Activated naive CD4-positive, alpha-beta T cell treated with anti-CD3 and anti-CD28 coated beads for 36 hours (primary cell): ENCODE measurements at regions of chr1 and their contacts with region 1.

Region 1: DNA sequence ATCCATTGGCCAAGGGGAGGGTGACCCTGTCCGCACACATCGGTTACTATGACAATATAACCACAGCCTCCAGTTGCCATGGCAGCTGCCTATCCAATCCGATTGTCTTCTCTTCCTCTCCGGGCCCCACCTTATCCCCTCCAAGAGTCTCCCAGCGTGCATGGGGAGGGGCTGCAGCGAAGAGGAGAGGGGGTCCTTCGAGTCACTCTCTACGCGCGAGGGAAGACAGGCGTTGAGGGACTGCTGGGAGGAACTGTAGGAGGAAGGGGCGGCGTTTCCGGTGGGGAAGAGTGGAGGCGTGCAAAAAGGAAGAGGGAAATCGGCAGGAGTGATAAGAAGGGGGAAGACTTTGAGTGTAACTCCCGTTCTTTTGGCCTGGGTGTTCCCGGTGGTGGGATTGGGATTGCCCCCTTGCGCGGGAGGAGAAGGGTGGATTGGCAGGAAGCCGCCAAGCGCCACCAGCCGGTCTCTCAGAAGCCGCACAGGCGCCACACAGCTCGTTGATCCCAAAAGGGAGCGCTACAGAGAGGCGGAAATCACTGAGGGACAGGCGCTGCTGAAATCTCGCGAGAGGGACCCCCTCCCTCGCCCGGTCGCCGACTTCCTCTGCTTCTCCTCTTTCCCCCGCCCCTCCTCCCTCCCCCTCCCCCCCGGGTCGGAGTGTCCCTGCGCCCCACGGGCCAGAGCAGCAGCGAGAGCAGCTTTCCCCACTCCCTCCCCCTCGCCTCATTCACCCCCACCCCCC is 384 bp upstream of the SMG7 start:
- DNase-seq: peak; percentile 98
- H3K4me3 Mint-ChIP-seq: peak overlapping the region; percentile 81
- H3K27ac Mint-ChIP-seq: peak overlapping the region; percentile 99
- H3K4me1 Mint-ChIP-seq: peaks cover 24% of the 10 kb centered on the region
- H3K27me3 Mint-ChIP-seq: no peaks in the 10 kb centered on the region

Region 2: DNA sequence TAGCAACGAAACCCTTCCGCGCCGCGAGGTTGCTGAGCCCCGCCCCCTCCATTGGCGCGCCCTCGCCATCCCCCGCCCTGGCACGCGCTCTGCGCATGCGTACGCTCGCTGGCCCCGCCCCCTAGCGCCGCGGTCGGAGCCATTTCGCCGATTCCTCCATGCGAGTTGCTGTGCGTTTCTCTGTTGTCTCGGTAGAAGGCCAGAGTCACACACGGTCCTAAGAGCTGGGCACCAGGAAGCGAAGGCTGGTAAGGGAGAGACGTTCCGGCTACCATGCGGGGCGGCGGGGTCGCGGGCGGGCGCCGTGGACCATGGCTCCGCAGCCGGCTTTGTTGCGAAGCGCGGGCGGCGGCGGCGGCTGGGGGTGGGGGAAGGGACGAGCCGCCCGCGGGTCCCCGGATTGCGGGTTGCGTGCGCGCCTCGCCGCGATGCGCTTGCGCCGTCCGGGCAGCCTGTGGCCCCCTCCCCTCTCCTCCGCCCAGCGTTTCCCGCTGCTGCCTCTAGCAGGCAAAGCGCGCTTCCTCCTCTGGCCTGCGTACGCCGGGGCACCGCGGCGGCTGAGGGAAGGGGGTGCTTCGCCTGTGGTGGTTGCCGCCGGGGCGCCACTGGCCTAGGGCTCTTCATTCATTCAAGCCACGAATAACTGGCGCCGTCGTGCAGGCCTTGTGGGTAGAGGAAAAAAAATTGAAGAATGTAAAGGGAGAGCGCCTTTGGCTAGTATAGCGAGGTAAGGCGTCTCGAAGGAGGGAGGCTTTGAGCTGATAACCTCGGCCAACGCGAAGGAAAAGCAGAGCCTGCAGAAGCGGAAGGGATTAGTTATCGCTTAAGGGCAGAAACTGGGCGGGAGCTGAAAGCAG is 632.5 kb before region 1 on chr1 and contains the start of gene DHX9:
- CTCF ChIA-PET with region 1: no interaction called
- intact Hi-C with region 1: loop called (anchors 1 kb)
- DNase-seq: peak; percentile 94
- H3K4me3 Mint-ChIP-seq: peak within 1 kb of the TSS; percentile 90
- H3K27ac Mint-ChIP-seq: peak within 1 kb of the TSS; percentile 95
- H3K4me1 Mint-ChIP-seq: peaks cover 44% of the 10 kb centered on the region
- H3K27me3 Mint-ChIP-seq: no peaks in the 10 kb centered on the region
- total RNA-seq, gene DHX9: 194 TPM

Region 3: DNA sequence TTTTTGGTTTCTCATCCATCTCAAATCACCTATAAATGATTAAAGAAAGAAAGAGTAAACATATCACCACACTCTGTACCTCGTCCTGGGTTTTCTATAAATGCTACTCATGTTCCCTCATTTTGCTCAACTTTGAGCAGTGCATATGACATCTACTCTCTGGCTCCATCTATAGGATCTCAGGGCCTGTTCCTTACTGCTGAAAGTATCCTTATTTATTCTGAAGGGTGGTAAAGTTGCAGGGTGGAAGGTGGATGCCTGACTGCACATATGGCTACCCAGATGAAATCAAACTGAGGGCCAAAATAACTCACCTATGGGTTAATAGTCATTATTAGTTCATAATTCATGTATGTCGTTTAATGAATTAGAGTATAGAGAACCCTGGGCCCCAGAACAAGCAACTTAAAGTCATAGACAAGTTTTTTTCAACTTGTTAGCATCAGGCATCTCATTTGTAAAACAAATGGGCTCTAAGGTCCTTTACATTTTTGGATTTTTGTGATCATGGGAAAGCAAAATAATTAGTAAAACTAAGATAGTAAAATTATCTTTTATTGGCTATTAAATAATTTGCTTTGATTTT is 71.8 kb after region 1 on chr1:
- CTCF ChIA-PET with region 1: interaction called, 3 read pairs
- intact Hi-C with region 1: loop called (anchors 1 kb)
- DNase-seq: no peak
- H3K4me3 Mint-ChIP-seq: no peak overlapping the region
- H3K27ac Mint-ChIP-seq: peak overlapping the region; percentile 43
- H3K4me1 Mint-ChIP-seq: no peaks in the 10 kb centered on the region
- H3K27me3 Mint-ChIP-seq: no peaks in the 10 kb centered on the region

Region 4: GRCh38 chr1:183655562-183656075 is 183.7 kb after region 1 on chr1:
- CTCF ChIA-PET with region 1: interaction called, 3 read pairs
- intact Hi-C with region 1: loop called (anchors 1 kb)
- DNase-seq: peak; percentile 87
- H3K4me3 Mint-ChIP-seq: peak overlapping the region; percentile 13
- H3K27ac Mint-ChIP-seq: no peak overlapping the region
- H3K4me1 Mint-ChIP-seq: peaks cover 40% of the 10 kb centered on the region
- H3K27me3 Mint-ChIP-seq: no peaks in the 10 kb centered on the region

Region 5: DNA sequence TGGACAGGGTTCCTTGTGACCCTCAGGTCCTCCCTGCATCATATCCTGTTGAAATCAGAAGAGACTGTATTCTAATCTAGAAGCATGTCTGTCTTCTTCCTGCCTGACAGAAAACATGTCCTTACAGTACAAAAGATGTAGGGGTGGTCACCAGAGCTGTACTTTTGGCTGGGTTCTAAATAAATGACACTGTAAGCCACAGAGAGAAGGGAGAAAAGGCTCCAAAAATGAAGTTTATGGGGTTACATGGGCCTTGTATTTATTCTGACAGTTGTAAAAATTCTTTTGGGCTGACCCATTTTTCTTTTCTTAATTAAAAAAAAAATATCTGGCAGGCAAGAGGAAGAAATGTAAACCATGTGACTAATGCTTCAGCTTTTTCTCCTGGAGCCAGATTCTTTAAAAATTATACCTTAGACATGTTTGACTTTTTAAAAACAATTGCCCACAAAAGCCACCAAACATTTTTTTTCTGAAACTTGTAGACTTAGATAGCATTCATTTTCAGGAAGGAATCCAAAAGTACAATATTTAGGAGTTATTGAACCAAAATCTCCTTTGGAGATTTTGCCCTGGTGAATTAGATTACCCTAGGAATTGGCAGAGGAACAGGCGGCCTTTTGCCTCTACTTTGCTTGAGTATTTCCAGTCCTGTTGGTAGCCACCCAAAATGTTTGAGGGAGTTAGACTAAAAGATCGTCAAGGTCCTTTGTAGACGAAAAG is 350.1 kb after region 1 on chr1:
- CTCF ChIA-PET with region 1: no interaction called
- intact Hi-C with region 1: no loop called
- DNase-seq: no peak
- H3K4me3 Mint-ChIP-seq: no peak overlapping the region
- H3K27ac Mint-ChIP-seq: no peak overlapping the region
- H3K4me1 Mint-ChIP-seq: no peaks in the 10 kb centered on the region
- H3K27me3 Mint-ChIP-seq: no peaks in the 10 kb centered on the region

Region 6: DNA sequence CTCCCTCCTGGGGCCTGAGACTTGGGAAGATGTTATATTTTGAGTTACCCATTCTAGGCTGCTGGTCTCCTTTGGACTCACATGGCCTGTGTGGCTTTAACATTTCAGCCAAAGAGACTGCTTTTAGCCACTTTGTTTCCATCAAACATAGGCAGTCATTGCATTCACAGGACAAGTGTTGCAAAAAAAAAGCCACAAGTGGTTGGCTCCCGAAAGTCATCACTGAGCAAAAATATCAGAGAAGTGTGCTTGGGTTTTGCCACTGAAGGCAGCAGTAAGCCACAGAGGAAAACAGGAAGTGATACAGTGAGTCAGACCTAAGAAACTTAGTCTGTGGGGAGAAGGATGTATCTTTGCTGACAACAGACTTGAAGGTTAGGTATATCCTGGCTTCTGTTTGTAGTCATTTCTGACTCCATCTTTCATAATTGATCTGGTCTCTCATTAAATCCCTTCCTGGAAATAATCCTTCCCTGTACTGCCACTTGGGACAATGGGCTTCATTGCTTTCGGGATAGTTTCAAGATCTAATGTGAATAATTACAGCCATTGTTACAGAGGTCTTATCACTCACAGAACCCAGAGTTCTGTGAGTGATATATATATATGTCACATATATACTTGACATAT is 484.8 kb after region 1 on chr1:
- CTCF ChIA-PET with region 1: no interaction called
- intact Hi-C with region 1: loop called (anchors 2 kb)
- DNase-seq: peak; percentile 71
- H3K4me3 Mint-ChIP-seq: no peak overlapping the region
- H3K27ac Mint-ChIP-seq: peak overlapping the region; percentile 86
- H3K4me1 Mint-ChIP-seq: no peaks in the 10 kb centered on the region
- H3K27me3 Mint-ChIP-seq: no peaks in the 10 kb centered on the region

Region 7: GRCh38 chr1:184754476-184755225 is 1282.7 kb after region 1 on chr1 and contains the start of gene EDEM3:
- CTCF ChIA-PET with region 1: no interaction called
- intact Hi-C with region 1: loop called (anchors 2 kb)
- DNase-seq: peak; percentile 98
- H3K4me3 Mint-ChIP-seq: peak within 1 kb of the TSS; percentile 88
- H3K27ac Mint-ChIP-seq: peak within 1 kb of the TSS; percentile 88
- H3K4me1 Mint-ChIP-seq: peaks cover 36% of the 10 kb centered on the region
- H3K27me3 Mint-ChIP-seq: no peaks in the 10 kb centered on the region
- total RNA-seq, gene EDEM3: 9.9 to 10.5 TPM